B cell (primary cell): ENCODE measurements at regions of chr1 and their contacts with region 1.

Region 1: GRCh38 chr1:109643385-109644230 is 12.3 kb upstream of the GSTM4 start:
- DNase-seq: peak; percentile 86
- ATAC-seq: peak; percentile 88
- H3K4me3 ChIP-seq: peak overlapping the region in 1 of 5 experiments; percentile 6
- H3K4me3 Mint-ChIP-seq: peak overlapping the region; percentile 7
- H3K27ac ChIP-seq: no peak overlapping the region
- H3K27ac Mint-ChIP-seq: no peak overlapping the region
- H3K4me1 ChIP-seq: peaks cover 4 to 14% of the 10 kb centered on the region in 2 donors
- H3K4me1 Mint-ChIP-seq: peaks cover 13% of the 10 kb centered on the region
- H3K27me3 ChIP-seq: peaks cover 0 to 2% (median 0%) of the 10 kb centered on the region in 4 experiments
- H3K27me3 Mint-ChIP-seq: peaks cover 4% of the 10 kb centered on the region
- CTCF ChIP-seq: peak; percentile 92

Region 2: DNA sequence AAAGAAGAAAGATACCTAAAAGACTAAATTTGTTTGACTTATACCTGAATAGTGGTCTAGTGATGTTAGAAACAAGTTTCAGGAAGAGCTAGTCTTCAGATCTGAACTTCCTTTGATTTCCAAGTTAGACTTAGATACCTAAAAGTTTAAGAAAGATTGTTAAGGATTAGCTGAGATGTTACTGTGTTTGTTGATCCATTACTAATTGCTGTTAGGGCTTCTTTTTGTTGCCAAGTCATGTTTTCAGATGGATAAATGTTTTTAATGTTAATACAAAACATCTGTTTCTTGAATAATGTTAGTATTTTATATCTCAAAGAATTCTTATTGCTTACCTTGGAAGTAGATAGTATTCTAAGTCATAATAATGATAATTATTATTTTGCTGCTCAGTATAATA is 83.6 kb before region 1 on chr1:
- CTCF ChIA-PET with region 1: interaction called, 10 read pairs
- POLR2A ChIA-PET with region 1: no interaction called
- intact Hi-C with region 1: no loop called
- DNase-seq: no peak
- ATAC-seq: no peak
- H3K4me3 ChIP-seq: no peak overlapping the region
- H3K4me3 Mint-ChIP-seq: no peak overlapping the region
- H3K27ac ChIP-seq: no peak overlapping the region
- H3K27ac Mint-ChIP-seq: no peak overlapping the region
- H3K4me1 ChIP-seq: peaks cover 7 to 25% of the 10 kb centered on the region in 2 donors
- H3K4me1 Mint-ChIP-seq: peaks cover 72% of the 10 kb centered on the region
- H3K27me3 ChIP-seq: no peaks in the 10 kb centered on the region
- H3K27me3 Mint-ChIP-seq: no peaks in the 10 kb centered on the region
- CTCF ChIP-seq: no peak

Region 3: DNA sequence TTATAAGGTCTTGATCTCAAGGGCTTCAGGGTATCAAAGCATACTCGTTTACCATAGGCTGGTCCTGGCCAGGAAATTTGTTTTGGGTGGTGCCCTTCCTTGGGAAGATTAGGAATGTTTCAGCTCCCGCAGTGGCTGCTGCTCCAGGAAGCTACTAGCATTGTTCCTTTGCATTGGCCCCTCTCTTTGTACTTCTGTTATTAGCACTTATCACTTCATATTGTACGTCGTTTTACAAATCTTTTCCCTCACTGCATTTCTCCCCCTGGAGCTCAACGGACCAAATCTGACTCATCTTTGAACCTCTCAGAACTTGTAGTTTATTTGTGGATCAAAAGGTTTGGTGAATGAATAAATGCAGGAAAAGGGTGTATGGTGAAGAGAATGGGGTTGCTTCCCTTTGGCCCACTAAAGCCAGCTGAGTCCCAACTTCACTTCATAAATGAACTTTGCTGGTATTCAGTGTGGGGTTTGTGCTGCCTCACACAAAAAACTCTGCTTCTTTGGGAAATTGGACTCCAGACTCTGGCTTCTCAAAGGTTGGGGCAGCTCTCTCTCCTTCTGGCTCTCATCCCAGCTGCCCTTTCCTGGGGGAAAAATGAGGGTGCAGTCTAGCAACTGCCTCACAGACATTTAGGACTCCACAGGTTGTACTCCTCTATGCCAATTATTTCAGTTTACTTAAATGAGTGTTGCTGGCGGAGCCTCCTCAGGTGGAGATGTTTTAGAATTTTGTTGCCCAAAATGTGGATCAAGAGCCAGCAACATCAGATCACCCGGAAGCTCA is 30.1 kb before region 1 on chr1:
- CTCF ChIA-PET with region 1: interaction called, 18 read pairs
- POLR2A ChIA-PET with region 1: no interaction called
- intact Hi-C with region 1: no loop called
- DNase-seq: no peak
- ATAC-seq: no peak
- H3K4me3 ChIP-seq: no peak overlapping the region
- H3K4me3 Mint-ChIP-seq: no peak overlapping the region
- H3K27ac ChIP-seq: no peak overlapping the region
- H3K27ac Mint-ChIP-seq: no peak overlapping the region
- H3K4me1 ChIP-seq: peaks cover 14 to 15% of the 10 kb centered on the region in 2 donors
- H3K4me1 Mint-ChIP-seq: peaks cover 15% of the 10 kb centered on the region
- H3K27me3 ChIP-seq: peaks cover 0 to 3% (median 0%) of the 10 kb centered on the region in 4 experiments
- H3K27me3 Mint-ChIP-seq: peaks cover 3% of the 10 kb centered on the region
- CTCF ChIP-seq: no peak

Region 4: GRCh38 chr1:109630081-109630897 is 13.3 kb before region 1 on chr1:
- CTCF ChIA-PET with region 1: interaction called, 64 read pairs
- POLR2A ChIA-PET with region 1: interaction called, 3 read pairs
- intact Hi-C with region 1: no loop called
- DNase-seq: peak; percentile 44
- ATAC-seq: peak; percentile 21
- H3K4me3 ChIP-seq: no peak overlapping the region
- H3K4me3 Mint-ChIP-seq: no peak overlapping the region
- H3K27ac ChIP-seq: no peak overlapping the region
- H3K27ac Mint-ChIP-seq: no peak overlapping the region
- H3K4me1 ChIP-seq: peaks cover 0 to 3% of the 10 kb centered on the region in 2 donors
- H3K4me1 Mint-ChIP-seq: peaks cover 11% of the 10 kb centered on the region
- H3K27me3 ChIP-seq: no peaks in the 10 kb centered on the region
- H3K27me3 Mint-ChIP-seq: no peaks in the 10 kb centered on the region
- CTCF ChIP-seq: peak; percentile 29

Region 5: GRCh38 chr1:109687616-109688499 is 44.2 kb after region 1 on chr1 and contains the start of gene GSTM1:
- CTCF ChIA-PET with region 1: interaction called, 21 read pairs
- POLR2A ChIA-PET with region 1: no interaction called
- intact Hi-C with region 1: loop called (anchors 2 kb)
- DNase-seq: peak; percentile 81
- ATAC-seq: peak; percentile 98
- H3K4me3 ChIP-seq: peak within 1 kb of the TSS in 3 of 5 experiments; percentile 56 to 82 (median 64)
- H3K4me3 Mint-ChIP-seq: peak within 1 kb of the TSS; percentile 92
- H3K27ac ChIP-seq: peak within 1 kb of the TSS in 1 of 2 donors; percentile 63
- H3K27ac Mint-ChIP-seq: peak within 1 kb of the TSS; percentile 92
- H3K4me1 ChIP-seq: no peaks in the 10 kb centered on the region
- H3K4me1 Mint-ChIP-seq: peaks cover 6% of the 10 kb centered on the region
- H3K27me3 ChIP-seq: no peaks in the 10 kb centered on the region
- H3K27me3 Mint-ChIP-seq: no peaks in the 10 kb centered on the region
- CTCF ChIP-seq: peak; percentile 20
- total RNA-seq, gene GSTM1: 28.8 and 30.5 TPM in 2 replicates

Region 6: GRCh38 chr1:110011527-110012041 is 368.0 kb after region 1 on chr1:
- CTCF ChIA-PET with region 1: interaction called, 28 read pairs
- POLR2A ChIA-PET with region 1: interaction called, 3 read pairs
- intact Hi-C with region 1: loop called (anchors 1 kb)
- DNase-seq: peak; percentile 92
- ATAC-seq: peak; percentile 93
- H3K4me3 ChIP-seq: peak overlapping the region in 3 of 5 experiments; percentile 29 to 37 (median 34)
- H3K4me3 Mint-ChIP-seq: peak overlapping the region; percentile 82
- H3K27ac ChIP-seq: peak overlapping the region; percentile 93 to 94
- H3K27ac Mint-ChIP-seq: peak overlapping the region; percentile 98
- H3K4me1 ChIP-seq: peaks cover 25 to 27% of the 10 kb centered on the region in 2 donors
- H3K4me1 Mint-ChIP-seq: peaks cover 33% of the 10 kb centered on the region
- H3K27me3 ChIP-seq: no peaks in the 10 kb centered on the region
- H3K27me3 Mint-ChIP-seq: no peaks in the 10 kb centered on the region
- CTCF ChIP-seq: peak; percentile 79